ENCODE measurements at regions of chr3 and their contacts with region 1.

Region 1: GRCh38 chr3:133464573-133464972 is 64.7 kb downstream of the BFSP2 start:
- DNase-seq: no peak
- H3K4me3 ChIP-seq: no peak overlapping the region
- H3K27ac ChIP-seq: no peak overlapping the region
- H3K4me1 ChIP-seq: peaks cover 43% of the 10 kb centered on the region
- H3K27me3 ChIP-seq: no peaks in the 10 kb centered on the region
- CTCF ChIP-seq: peak; percentile 42; the same call in 1 of the 2 replicates

Region 2: DNA sequence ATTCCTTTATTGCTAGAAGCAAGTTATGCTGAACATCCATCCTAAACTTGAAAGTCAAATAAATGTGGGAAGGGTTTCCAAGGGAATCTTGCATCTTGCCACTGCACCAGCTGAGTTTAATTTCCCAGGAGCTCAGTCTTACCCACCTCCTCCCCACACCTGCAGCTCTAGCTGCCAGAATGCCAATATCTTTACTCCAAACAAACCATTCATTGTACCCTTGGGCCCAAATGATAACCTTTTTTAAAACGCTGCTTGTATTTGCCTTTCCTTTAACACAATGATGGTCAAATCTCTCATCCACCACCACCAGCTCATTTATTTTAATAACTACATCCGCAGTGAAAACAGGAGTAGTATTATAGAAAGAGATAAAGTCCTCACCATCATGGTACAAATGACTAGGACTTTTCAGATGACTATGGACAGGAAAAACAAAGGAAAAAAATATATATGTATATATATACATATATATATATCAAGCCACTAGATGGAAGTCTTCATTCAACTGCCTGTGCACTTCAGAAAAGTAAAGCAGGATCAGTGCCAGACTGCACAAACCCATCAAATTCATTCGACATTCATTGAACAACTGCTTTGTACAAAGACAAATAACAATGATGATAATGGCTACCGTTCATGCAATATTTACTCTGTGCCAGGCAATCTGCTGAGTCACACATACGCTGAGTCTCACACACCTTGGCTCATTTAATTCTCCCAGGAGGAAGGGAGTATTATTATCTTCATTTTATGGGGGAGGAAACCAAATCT is 20.7 kb before region 1 on chr3:
- CTCF ChIA-PET with region 1: no interaction called
- POLR2A ChIA-PET with region 1: no interaction called
- intact Hi-C with region 1: no loop called
- DNase-seq: peak; percentile 41 to 90
- H3K4me3 ChIP-seq: no peak overlapping the region
- H3K27ac ChIP-seq: peak overlapping the region; percentile 76
- H3K4me1 ChIP-seq: peaks cover 15% of the 10 kb centered on the region
- H3K27me3 ChIP-seq: no peaks in the 10 kb centered on the region
- CTCF ChIP-seq: peak; percentile 52

Region 3: DNA sequence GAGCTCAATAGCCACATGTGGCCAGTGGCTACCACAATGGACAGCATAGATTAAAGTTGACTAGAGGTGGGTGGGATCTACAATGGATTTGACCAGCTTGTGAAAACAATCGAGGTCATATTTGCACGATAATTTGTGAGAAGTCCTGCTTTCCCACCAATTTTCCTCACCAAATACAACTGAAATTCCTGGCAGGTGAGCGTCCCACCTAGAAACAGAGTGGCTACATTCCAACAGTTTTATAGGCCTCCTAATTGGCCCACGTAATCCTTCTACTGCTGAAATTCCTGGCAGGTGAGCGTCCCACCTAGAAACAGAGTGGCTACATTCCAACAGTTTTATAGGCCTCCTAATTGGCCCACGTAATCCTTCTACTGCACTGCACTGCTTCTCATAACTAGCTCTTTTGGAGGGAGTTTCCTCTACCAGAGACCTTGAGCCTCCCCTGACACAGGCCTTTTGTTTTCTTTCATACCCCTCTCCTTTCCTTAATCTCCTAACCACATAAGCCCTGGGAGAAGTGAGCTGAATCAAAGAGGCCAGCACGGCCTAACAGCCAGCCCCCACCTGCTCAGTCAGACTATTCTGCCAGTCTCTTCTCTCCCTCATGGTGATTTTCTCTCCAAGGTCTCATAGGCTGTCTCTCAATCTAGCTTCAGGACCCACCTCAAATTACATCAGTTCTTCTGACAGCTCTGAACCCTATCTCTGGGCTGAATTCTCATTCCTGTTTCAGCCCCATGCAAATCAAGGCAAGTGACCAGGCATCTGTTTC is 15.5 kb after region 1 on chr3:
- CTCF ChIA-PET with region 1: interaction called, 11 read pairs
- POLR2A ChIA-PET with region 1: interaction called, 3 read pairs
- intact Hi-C with region 1: loop called (anchors 1 kb)
- DNase-seq: peak; percentile 67 to 97
- H3K4me3 ChIP-seq: no peak overlapping the region; the same call in 1 of the 2 replicates
- H3K27ac ChIP-seq: peak overlapping the region; percentile 98
- H3K4me1 ChIP-seq: peaks cover 20% of the 10 kb centered on the region
- H3K27me3 ChIP-seq: no peaks in the 10 kb centered on the region
- CTCF ChIP-seq: no peak

Region 4: GRCh38 chr3:133521946-133522345 is 57.4 kb after region 1 on chr3:
- CTCF ChIA-PET with region 1: no interaction called
- POLR2A ChIA-PET with region 1: interaction called, 23 read pairs
- intact Hi-C with region 1: no loop called
- DNase-seq: no peak
- H3K4me3 ChIP-seq: no peak overlapping the region
- H3K27ac ChIP-seq: no peak overlapping the region
- H3K4me1 ChIP-seq: no peaks in the 10 kb centered on the region
- H3K27me3 ChIP-seq: no peaks in the 10 kb centered on the region
- CTCF ChIP-seq: no peak

Region 5: DNA sequence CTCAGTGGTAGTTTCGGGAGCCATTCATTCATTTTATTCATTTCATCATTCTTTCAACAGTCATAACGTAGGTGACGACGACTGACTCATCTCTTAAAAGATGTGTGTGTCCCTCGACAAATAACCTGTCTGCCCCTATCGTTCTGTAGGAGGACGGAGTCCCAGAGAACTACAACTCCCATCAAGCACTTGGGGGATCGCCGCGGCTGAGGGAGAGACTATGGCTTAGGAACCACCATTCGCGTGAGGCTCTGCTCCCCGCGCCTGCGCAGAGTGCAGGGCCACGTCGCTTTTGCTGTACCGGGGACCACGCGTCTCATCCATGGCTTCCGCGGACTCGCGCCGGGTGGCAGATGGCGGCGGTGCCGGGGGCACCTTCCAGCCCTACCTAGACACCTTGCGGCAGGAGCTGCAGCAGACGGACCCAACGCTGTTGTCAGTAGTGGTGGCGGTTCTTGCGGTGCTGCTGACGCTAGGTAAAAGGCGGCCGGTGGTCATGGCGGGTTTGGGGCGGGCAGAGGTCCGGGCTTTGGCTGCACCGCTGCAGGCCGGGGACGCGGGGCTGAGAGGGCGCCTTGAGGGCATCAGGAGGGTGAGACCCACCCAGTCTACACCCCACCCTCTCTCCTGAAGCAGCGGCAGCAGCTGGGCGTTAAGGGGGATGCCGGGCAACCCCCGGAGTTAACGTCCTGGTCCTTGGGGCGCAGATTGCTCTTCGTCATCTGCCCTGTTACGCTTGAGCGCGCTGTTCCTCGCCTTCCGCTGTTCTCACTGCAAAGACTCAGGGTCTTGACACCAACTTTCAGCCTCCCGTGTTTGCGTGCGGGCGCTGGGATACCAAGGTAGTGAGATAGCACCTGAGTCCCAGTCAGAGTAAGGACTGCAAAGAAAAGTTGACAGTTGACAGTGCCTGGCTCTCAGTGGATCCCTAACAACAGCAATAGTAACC is 341.2 kb after region 1 on chr3 and contains the start of gene SRPRB:
- CTCF ChIA-PET with region 1: no interaction called
- POLR2A ChIA-PET with region 1: no interaction called
- intact Hi-C with region 1: loop called (anchors 10 kb)
- DNase-seq: peak; percentile 89 to 92
- H3K4me3 ChIP-seq: peak within 1 kb of the TSS; percentile 79
- H3K27ac ChIP-seq: peak within 1 kb of the TSS; percentile 43; the same call in 1 of the 2 replicates
- H3K4me1 ChIP-seq: peaks cover 18% of the 10 kb centered on the region
- H3K27me3 ChIP-seq: no peaks in the 10 kb centered on the region
- CTCF ChIP-seq: no peak
- total RNA-seq, gene SRPRB: 25.5 and 29.8 TPM in 2 replicates